Activated CD4-positive, alpha-beta memory T cell treated with anti-CD3 and anti-CD28 coated beads for 36 hours (primary cell): ENCODE measurements at regions of chr6 and their contacts with region 1.

Region 1: DNA sequence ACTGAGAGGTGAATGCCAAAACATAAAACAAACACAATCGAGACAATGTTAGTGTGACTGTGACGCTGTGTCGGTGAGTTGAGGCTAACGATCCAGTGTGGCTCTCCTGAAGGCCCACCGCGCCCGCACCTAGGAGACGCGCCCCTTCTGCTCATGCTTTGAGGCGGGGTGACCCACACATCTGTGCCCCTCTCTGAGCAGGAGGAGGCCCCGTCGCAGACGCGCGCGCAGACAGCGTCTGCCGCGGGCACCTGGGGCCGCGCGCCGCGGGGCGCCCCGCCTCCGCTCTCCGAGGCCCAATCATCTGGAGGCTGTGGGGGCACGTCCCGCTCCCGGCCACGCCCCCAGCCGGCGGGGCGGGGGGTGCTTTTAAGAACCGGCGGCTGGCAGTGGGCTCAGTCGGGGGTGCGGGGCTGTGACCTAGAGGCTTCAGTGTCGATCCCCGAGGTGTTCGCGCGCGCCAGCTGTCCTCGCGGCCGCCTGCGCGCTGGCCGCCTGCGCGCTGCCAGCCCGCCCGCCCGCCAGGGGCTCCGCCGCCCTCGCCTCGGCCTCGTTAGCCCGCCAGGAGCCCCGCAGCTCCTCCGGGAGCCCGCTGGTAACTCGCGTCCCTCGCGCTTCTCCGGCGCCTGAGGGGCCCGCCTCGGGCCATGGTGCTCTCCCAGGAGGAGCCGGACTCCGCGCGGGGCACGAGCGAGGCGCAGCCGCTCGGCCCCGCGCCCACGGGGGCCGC is at the start of gene SLC16A10:
- DNase-seq: peak; percentile 79
- H3K4me3 Mint-ChIP-seq: peak within 1 kb of the TSS; percentile 77
- H3K27ac Mint-ChIP-seq: peak within 1 kb of the TSS; percentile 8
- H3K4me1 Mint-ChIP-seq: peaks cover 28% of the 10 kb centered on the region
- H3K27me3 Mint-ChIP-seq: peaks cover 11% of the 10 kb centered on the region
- total RNA-seq, gene SLC16A10: 3.4 to 3.6 TPM

Region 2: DNA sequence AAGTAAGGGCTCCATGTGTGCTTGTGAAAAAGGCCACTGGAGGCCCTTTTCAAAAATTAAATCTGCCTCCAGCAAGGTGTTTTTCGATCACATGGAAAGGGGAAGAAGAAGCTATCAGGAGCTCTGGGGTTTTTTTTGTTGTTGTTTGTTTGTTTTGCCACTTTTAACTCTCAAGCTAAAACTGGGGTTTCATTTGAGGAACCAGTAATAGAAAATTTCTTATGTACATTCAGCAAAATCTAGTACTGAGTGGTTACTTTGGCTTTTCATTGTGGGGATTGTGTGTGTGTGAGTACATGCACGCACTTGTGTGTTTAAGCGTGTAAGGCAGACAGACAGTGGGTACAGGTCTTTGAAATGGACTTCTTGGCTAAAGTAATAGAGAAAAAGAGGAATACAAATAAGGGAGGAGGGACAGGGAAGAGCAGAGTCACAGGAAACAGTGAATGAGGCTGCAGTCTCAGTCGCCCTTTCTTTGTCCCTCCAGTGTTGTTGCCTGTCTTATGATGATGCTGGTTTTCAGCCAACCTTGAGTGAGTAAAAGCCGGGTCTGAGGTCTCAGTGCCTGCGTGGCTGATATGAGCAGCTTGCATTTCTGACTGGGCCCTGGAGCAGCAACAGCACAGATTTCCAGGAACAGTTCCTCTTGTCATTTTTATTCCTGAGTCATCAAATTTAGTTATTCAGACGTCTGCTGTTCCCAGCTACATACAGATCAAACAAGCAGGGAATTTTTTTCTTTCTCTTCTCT is 26.2 kb after region 1 on chr6:
- CTCF ChIA-PET with region 1: no interaction called
- POLR2A ChIA-PET with region 1: no interaction called
- intact Hi-C with region 1: loop called (anchors 1 kb)
- DNase-seq: peak; percentile 76
- H3K4me3 Mint-ChIP-seq: no peak overlapping the region
- H3K27ac Mint-ChIP-seq: peak overlapping the region; percentile 82
- H3K4me1 Mint-ChIP-seq: peaks cover 19% of the 10 kb centered on the region
- H3K27me3 Mint-ChIP-seq: no peaks in the 10 kb centered on the region

Region 3: DNA sequence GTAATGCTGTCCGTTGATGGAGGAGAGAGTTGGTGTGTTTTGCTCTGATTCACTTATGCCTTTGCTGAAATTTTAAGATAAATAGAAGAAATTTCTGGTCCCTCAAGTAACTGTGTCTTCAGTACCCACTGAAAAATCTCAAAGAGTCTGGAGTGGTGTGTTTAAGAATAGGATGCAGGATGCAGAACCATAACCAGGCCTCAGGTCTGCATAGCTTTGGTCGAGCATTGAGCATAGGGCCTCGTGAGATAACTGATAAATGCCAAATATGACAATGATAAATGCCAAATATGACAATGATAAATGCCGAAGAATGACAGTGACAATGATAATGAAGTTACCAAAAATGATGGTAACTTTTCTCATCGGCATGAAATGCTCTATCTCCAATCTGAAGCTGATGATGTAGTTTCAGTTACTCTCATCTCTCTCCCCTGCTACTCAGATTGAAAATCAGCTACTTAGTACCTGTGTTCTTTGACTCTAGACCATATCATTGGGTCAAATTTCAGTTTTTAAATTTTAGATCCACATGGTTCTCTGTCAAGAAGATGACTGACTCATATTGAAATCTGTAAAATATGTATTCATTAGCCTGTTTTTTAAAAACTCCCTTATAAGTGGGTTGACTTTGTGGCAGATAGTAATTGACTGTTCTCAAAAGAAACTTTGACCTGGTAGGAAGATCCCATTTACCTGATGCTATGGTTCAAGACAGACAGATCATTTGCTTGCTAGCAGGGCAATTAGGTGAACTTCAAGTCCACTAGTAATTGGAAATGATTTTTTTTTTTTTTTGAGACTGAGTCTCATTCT is 96.6 kb after region 1 on chr6:
- CTCF ChIA-PET with region 1: no interaction called
- POLR2A ChIA-PET with region 1: no interaction called
- intact Hi-C with region 1: loop called (anchors 5 kb)
- DNase-seq: no peak
- H3K4me3 Mint-ChIP-seq: no peak overlapping the region
- H3K27ac Mint-ChIP-seq: no peak overlapping the region
- H3K4me1 Mint-ChIP-seq: peaks cover 10% of the 10 kb centered on the region
- H3K27me3 Mint-ChIP-seq: no peaks in the 10 kb centered on the region

Region 4: GRCh38 chr6:111837641-111838500 is 750.6 kb after region 1 on chr6:
- CTCF ChIA-PET with region 1: no interaction called
- POLR2A ChIA-PET with region 1: no interaction called
- intact Hi-C with region 1: no loop called
- DNase-seq: peak; percentile 77
- H3K4me3 Mint-ChIP-seq: peak overlapping the region; percentile 54
- H3K27ac Mint-ChIP-seq: peak overlapping the region; percentile 91
- H3K4me1 Mint-ChIP-seq: peaks cover 37% of the 10 kb centered on the region
- H3K27me3 Mint-ChIP-seq: no peaks in the 10 kb centered on the region

Region 5: DNA sequence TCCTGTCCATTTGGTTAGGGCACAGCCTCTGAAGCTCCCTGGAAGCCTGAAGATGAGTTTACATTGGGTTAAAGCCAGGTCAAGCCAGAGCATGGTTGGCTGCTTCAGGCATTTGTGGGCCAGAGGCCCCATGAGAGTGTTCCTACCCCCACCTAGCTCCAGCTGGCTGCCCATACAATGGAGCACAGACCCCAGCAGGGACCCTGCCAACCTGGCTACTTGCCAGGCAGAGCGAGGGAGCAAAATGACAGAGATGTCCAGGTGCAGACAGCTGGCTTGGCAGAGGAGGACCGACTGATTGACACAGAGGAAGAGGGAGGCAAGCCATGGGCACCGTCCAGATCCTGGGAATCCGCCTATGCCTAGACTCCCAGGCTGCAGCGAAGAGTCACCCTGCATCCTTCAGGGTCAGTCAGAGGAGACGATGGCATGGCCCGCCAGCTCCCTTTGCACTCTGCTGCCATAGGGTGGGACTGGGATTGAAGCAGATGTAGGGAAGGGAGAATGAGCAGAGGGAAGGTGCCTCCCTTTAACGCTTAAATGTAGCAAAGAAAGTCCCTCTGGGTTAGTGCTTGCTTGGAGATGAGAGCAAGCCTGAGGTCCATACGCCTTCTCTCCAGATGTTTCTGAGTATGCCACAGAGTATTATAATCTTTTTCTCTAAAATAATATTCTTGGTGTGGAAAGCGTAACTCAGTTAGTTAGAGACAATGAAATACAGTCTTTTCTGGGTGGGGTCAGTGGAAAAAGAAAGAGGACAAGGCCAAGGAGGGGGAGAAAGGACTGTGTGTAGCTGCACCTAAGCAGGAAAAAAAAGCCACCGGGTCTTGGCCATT is 863.6 kb after region 1 on chr6:
- CTCF ChIA-PET with region 1: no interaction called
- POLR2A ChIA-PET with region 1: no interaction called
- intact Hi-C with region 1: no loop called
- DNase-seq: no peak
- H3K4me3 Mint-ChIP-seq: no peak overlapping the region
- H3K27ac Mint-ChIP-seq: no peak overlapping the region
- H3K4me1 Mint-ChIP-seq: peaks cover 5% of the 10 kb centered on the region
- H3K27me3 Mint-ChIP-seq: no peaks in the 10 kb centered on the region